Panc1 (cell line): ENCODE measurements at regions of chr2 and their contacts with region 1.

Region 1: GRCh38 chr2:30862054-30862651 is 54.9 kb upstream of the CAPN13 start:
- DNase-seq: peak; percentile 42
- ATAC-seq: no peak
- H3K4me3 ChIP-seq: no peak overlapping the region
- H3K27ac ChIP-seq: no peak overlapping the region
- H3K4me1 ChIP-seq: no peaks in the 10 kb centered on the region
- H3K27me3 ChIP-seq: no peaks in the 10 kb centered on the region
- CTCF ChIP-seq: peak; percentile 79

Region 2: DNA sequence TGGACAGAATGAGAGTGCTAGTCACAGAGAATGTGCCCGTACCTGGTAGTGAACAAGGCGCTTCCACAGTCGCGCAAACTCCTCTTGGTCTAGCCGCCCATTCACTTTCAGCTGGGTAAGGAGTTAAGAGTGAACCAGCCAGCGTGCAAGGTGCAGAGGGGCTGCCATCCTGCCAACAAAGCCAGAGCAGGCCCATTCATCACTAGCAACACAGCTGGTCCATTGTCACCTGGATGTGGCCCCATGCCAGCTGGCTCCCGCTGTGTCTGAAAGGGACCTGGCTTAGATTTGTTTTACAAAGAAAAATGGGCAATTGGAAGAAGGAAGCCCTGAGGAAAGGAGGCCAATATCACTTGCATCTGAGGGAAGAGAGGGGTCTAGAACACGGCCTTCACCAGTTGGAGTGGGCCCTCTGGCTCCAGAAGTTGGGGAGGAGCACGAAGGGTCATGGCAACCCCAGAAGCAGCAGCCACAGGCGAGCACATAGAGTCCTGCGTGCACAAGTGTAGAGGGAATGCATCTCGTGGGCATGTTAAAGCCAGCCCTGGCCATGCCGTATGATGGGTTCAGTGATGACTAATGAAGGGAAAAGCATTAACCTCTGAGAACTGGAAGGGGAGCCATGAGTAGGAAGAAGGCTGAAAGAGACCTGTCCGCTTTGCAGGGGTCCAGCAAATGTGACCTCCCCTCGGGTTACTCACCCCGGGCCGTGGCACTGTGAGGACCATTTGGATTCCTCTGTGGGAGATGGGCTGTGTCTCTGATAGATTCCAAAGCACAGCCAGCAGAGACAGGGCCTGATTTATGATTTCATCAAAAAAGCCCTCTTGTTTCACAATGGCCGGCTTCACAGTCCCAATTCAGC is 125.5 kb before region 1 on chr2:
- CTCF ChIA-PET with region 1: no interaction called
- POLR2A ChIA-PET with region 1: no interaction called
- in situ Hi-C with region 1: no loop called
- intact Hi-C with region 1: no loop called
- DNase-seq: no peak
- ATAC-seq: no peak
- H3K4me3 ChIP-seq: no peak overlapping the region
- H3K27ac ChIP-seq: no peak overlapping the region
- H3K4me1 ChIP-seq: no peaks in the 10 kb centered on the region
- H3K27me3 ChIP-seq: peaks cover 2% of the 10 kb centered on the region; the same call in 1 of the 2 replicates
- CTCF ChIP-seq: no peak

Region 3: DNA sequence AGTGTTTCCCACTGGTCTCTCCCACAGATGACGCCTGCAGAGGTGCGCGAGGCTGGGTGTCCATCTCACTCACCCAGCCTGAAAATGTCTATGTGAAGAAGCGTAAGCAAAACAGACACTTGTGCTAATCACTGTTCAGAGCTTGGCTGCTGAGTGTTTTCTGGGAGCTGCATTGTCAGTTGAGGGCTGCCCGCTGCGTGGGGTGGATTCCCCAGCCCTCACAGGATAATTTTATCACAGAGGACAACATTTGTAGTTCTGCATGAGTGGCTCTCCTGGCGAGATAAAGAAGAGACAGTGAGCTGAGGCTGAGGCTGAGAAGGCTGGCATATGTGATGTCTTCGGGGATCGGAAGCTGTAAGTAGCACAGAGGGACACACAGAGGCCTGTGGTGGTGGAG is 38.7 kb before region 1 on chr2:
- CTCF ChIA-PET with region 1: no interaction called
- POLR2A ChIA-PET with region 1: no interaction called
- in situ Hi-C with region 1: no loop called
- intact Hi-C with region 1: no loop called
- DNase-seq: no peak
- ATAC-seq: no peak
- H3K4me3 ChIP-seq: no peak overlapping the region
- H3K27ac ChIP-seq: no peak overlapping the region
- H3K4me1 ChIP-seq: no peaks in the 10 kb centered on the region
- H3K27me3 ChIP-seq: no peaks in the 10 kb centered on the region
- CTCF ChIP-seq: no peak

Region 4: GRCh38 chr2:31333527-31334183 is 471.5 kb after region 1 on chr2:
- CTCF ChIA-PET with region 1: no interaction called
- POLR2A ChIA-PET with region 1: no interaction called
- in situ Hi-C with region 1: no loop called
- intact Hi-C with region 1: loop called (anchors 10 kb)
- DNase-seq: peak; percentile 66
- ATAC-seq: peak; percentile 93
- H3K4me3 ChIP-seq: no peak overlapping the region
- H3K27ac ChIP-seq: no peak overlapping the region
- H3K4me1 ChIP-seq: no peaks in the 10 kb centered on the region
- H3K27me3 ChIP-seq: no peaks in the 10 kb centered on the region; the same call in none of the 2 replicates
- CTCF ChIP-seq: peak; percentile 91